Activated CD4-positive, alpha-beta T cell treated with anti-CD3 and anti-CD28 coated beads for 36 hours (primary cell): ENCODE measurements at regions of chr4 and their contacts with region 1.

Region 1: GRCh38 chr4:113355550-113356371 is 306.3 kb downstream of the ANK2 start:
- DNase-seq: peak; percentile 88
- ATAC-seq: peak; percentile 95
- H3K4me3 Mint-ChIP-seq: peak overlapping the region; percentile 47
- H3K27ac Mint-ChIP-seq: peak overlapping the region; percentile 94
- H3K4me1 Mint-ChIP-seq: peaks cover 43% of the 10 kb centered on the region
- H3K27me3 Mint-ChIP-seq: peaks cover 42% of the 10 kb centered on the region

Region 2: DNA sequence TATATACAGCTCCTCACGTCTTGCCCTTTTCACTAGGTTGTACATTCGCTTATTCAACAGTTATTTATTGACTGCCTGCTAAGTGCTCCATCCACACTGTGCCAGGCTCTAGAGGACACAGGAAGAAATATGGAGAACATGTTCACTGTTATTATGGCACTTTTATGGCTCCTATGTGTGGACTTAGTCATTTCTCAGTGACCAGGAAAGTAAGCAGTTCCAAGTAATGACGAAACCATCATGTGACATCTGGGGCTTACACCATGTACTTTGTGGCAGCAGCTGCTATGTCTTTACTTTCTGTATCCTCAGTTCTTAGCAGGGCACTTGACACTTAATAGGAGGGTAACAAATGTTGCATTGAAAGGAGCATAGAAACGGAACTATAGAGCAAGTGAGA is 28.3 kb before region 1 on chr4:
- CTCF ChIA-PET with region 1: no interaction called
- POLR2A ChIA-PET with region 1: no interaction called
- intact Hi-C with region 1: loop called in 1 of 2 experiments (anchors 2 kb)
- DNase-seq: no peak
- ATAC-seq: no peak
- H3K4me3 Mint-ChIP-seq: no peak overlapping the region
- H3K27ac Mint-ChIP-seq: no peak overlapping the region
- H3K4me1 Mint-ChIP-seq: no peaks in the 10 kb centered on the region
- H3K27me3 Mint-ChIP-seq: peaks cover 6% of the 10 kb centered on the region

Region 3: GRCh38 chr4:113445286-113445685 is 89.5 kb after region 1 on chr4:
- CTCF ChIA-PET with region 1: interaction called, 3 read pairs
- POLR2A ChIA-PET with region 1: no interaction called
- intact Hi-C with region 1: loop called (anchors 2 to 10 kb)
- DNase-seq: no peak
- ATAC-seq: no peak
- H3K4me3 Mint-ChIP-seq: no peak overlapping the region
- H3K27ac Mint-ChIP-seq: peak overlapping the region; percentile 85
- H3K4me1 Mint-ChIP-seq: peaks cover 27% of the 10 kb centered on the region
- H3K27me3 Mint-ChIP-seq: no peaks in the 10 kb centered on the region

Region 4: DNA sequence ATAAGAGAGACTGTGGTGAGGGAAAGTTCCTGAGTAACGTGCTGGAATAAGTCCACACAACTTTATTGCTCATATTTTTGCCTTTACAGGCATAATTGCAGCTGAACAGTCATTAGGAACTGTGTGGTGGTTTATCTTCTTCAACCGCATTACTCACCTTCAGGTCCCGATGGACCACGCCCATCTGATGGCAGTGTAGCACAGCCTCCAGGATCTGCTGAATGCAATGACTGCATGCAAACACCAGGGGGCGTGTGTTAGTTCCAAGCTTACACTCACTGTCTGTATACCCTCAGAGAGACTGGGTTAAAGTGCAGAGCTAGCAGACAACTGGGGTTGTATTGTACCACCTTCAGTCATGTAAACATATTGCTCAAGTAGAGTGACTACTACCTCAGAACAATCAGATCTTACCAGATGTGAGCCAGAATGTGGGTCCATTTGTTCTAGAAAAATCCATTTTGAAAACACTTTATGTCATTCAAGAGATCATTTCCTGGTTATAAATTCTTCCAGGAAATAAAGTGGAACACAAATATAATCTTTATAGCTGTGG is 191.8 kb after region 1 on chr4:
- CTCF ChIA-PET with region 1: no interaction called
- POLR2A ChIA-PET with region 1: no interaction called
- intact Hi-C with region 1: loop called (anchors 1 kb)
- DNase-seq: peak; percentile 95
- ATAC-seq: peak; percentile 99
- H3K4me3 Mint-ChIP-seq: no peak overlapping the region
- H3K27ac Mint-ChIP-seq: peak overlapping the region; percentile 49
- H3K4me1 Mint-ChIP-seq: peaks cover 24% of the 10 kb centered on the region
- H3K27me3 Mint-ChIP-seq: no peaks in the 10 kb centered on the region

Region 5: GRCh38 chr4:113657586-113658233 is 301.9 kb after region 1 on chr4:
- CTCF ChIA-PET with region 1: no interaction called
- POLR2A ChIA-PET with region 1: no interaction called
- intact Hi-C with region 1: no loop called
- DNase-seq: no peak
- ATAC-seq: peak; percentile 64
- H3K4me3 Mint-ChIP-seq: no peak overlapping the region
- H3K27ac Mint-ChIP-seq: peak overlapping the region; percentile 20
- H3K4me1 Mint-ChIP-seq: peaks cover 31% of the 10 kb centered on the region
- H3K27me3 Mint-ChIP-seq: no peaks in the 10 kb centered on the region

Region 6: DNA sequence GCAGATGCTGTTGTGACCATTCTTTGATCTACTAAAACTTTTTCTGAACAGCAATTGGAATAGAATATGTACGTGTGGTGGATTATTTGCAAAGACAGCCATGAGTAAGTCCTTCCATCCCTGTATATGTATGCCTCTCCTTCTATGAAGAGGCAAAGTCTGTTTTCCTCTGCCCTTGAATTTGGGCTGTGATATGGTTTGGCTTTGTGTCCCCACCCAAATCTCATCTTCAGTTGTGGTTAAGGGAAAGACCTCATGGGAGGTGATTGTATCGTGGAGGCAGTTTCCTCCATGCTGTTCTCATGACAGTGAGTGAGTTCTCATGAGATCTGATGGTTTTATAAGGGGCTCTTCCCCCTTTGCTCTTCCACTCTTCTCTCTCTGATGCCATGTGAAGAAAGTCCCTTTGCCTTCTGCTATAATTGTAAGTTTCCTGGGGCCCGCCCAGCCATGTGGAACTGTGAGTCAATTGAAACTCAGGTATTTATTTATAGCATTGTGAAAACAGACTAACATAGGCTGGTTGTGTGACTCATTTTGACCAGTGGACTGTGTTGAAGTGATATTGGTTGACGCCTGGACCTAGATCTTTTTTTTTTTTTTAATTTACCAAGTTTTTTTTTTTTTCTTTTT is 514.1 kb after region 1 on chr4:
- CTCF ChIA-PET with region 1: no interaction called
- POLR2A ChIA-PET with region 1: no interaction called
- intact Hi-C with region 1: loop called in 1 of 2 experiments (anchors 5 kb)
- DNase-seq: peak; percentile 81
- ATAC-seq: peak; percentile 94
- H3K4me3 Mint-ChIP-seq: peak overlapping the region; percentile 26
- H3K27ac Mint-ChIP-seq: peak overlapping the region; percentile 85
- H3K4me1 Mint-ChIP-seq: peaks cover 38% of the 10 kb centered on the region
- H3K27me3 Mint-ChIP-seq: no peaks in the 10 kb centered on the region